Activated T-helper 2 cell treated with anti-CD3 and anti-CD28 coated beads, Interferon-gamma antibody, Interleukin-2, Interleukin-4, amounts not matched to agents 10 μg/mL and 5 μg/mL and 100 μg/mL, durations not matched to agents 14 hours and 24 hours and 36 hours (primary cell): ENCODE measurements at regions of chr2 and their contacts with region 1.

Region 1: GRCh38 chr2:234308813-234309195 is 188.1 kb downstream of the ARL4C start:
- DNase-seq: peak; percentile 78
- H3K4me3 Mint-ChIP-seq: peak overlapping the region; percentile 51
- H3K27ac Mint-ChIP-seq: peak overlapping the region; percentile 96
- H3K4me1 Mint-ChIP-seq: peaks cover 60% of the 10 kb centered on the region
- H3K27me3 Mint-ChIP-seq: no peaks in the 10 kb centered on the region

Region 2: DNA sequence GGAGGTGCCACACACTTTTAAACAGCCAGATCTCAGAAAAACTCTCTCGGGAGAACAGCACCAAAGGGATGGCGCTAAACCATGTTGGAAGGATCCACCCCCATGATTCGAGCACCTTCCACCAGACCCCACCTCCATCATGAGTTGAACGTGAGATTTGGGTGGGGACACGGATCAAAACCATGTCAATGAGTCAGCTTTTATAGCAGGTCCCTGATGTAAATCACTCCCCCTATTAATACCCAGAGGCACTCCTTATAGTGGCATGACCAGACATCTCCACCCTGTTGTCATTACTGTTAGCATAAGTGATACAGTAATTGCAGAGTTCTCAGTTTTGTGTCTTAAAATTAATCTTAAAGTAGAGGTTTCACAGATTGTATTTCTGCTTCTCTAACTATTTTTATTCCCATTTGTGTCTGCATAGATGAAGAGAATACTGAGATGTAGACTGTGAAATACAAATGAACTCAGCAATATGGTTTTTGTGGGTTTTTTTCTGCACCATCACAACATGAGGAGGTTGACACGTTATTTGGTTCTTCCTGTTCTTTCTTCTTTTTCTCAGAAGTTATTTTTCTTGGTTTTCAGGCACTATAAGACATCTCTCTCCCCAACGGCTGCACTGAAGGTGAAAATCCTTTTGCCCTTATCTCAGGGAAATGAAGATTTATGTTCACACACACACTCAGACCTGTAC is 30.1 kb before region 1 on chr2:
- intact Hi-C with region 1: loop called (anchors 1 kb)
- DNase-seq: peak; percentile 28
- H3K4me3 Mint-ChIP-seq: no peak overlapping the region
- H3K27ac Mint-ChIP-seq: peak overlapping the region; percentile 71
- H3K4me1 Mint-ChIP-seq: peaks cover 66% of the 10 kb centered on the region
- H3K27me3 Mint-ChIP-seq: no peaks in the 10 kb centered on the region

Region 3: DNA sequence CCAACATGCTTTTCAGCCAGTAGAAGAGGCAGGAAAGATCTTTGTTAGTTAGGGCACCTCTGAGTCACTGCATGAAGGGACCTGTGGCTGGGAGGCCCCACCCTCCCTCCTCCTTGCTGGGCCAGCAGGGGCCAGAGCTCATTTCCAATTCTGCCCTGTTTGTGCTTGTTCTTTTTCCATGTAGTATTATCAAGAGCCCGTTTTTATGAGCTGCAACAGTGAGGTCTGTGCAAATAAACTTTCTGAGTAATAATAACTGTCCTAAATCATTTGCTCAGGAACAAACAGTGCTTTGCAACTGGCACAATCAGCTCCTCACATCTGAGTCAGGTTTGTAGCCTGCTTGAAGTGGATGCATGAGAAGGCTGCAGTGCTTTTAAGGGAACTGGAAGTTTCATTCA is 60.1 kb after region 1 on chr2:
- intact Hi-C with region 1: loop called (anchors 2 kb)
- DNase-seq: peak; percentile 34
- H3K4me3 Mint-ChIP-seq: no peak overlapping the region
- H3K27ac Mint-ChIP-seq: peak overlapping the region; percentile 75
- H3K4me1 Mint-ChIP-seq: peaks cover 66% of the 10 kb centered on the region
- H3K27me3 Mint-ChIP-seq: no peaks in the 10 kb centered on the region

Region 4: DNA sequence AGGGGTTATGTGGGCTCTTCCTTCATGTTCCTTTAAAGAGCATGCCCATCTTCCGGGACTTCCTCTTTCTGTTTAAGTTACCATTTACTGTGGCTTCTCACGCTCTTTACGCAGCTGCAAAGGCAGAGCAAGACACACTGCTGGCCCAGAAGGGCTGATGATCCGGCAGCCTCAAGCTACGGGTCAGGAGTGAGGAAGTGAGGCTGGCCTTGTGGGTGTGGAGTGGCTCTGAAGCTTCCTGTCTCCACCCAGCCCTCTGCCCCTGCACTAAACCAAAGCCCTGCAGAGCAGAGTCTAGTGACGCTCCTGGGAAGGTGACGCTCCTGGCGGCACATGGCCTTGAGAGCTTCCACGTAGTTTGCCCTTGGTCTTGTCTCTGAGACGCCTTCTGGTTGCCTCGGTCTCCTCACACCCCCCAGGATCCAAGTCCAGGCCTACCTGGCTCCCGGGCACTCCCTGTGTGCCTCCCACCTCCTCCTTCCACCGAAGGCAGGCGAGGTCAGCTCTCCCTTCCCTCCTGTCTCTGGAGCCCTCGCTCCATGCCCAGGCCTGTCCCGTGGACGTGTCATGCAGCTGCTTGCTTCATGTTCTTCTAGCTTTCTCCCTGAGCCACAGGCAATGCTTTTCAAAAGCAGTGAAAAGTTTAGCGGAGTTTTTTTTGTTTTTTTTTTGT is 137.7 kb after region 1 on chr2:
- intact Hi-C with region 1: loop called (anchors 2 kb)
- DNase-seq: peak; percentile 85
- H3K4me3 Mint-ChIP-seq: peak overlapping the region; percentile 53
- H3K27ac Mint-ChIP-seq: peak overlapping the region; percentile 96
- H3K4me1 Mint-ChIP-seq: peaks cover 77% of the 10 kb centered on the region
- H3K27me3 Mint-ChIP-seq: no peaks in the 10 kb centered on the region

Region 5: GRCh38 chr2:234463626-234464290 is 155.0 kb after region 1 on chr2:
- intact Hi-C with region 1: loop called (anchors 2 kb)
- DNase-seq: peak; percentile 76
- H3K4me3 Mint-ChIP-seq: peak overlapping the region; percentile 81
- H3K27ac Mint-ChIP-seq: peak overlapping the region; percentile 91
- H3K4me1 Mint-ChIP-seq: peaks cover 57% of the 10 kb centered on the region
- H3K27me3 Mint-ChIP-seq: no peaks in the 10 kb centered on the region